ENCODE measurements at regions of chr1 and their contacts with region 1.

Region 1: GRCh38 chr1:7667625-7668218 is 103.4 kb upstream of the VAMP3 start:
- DNase-seq: peak; percentile 82
- H3K4me3 Mint-ChIP-seq: no peak overlapping the region
- H3K27ac Mint-ChIP-seq: peak overlapping the region; percentile 32
- H3K4me1 Mint-ChIP-seq: no peaks in the 10 kb centered on the region
- H3K27me3 Mint-ChIP-seq: no peaks in the 10 kb centered on the region
- CTCF ChIP-seq: peak; percentile 99

Region 2: GRCh38 chr1:7447077-7447476 is 220.6 kb before region 1 on chr1:
- CTCF ChIA-PET with region 1: no interaction called
- POLR2A ChIA-PET with region 1: no interaction called
- intact Hi-C with region 1: no loop called
- DNase-seq: no peak
- H3K4me3 Mint-ChIP-seq: no peak overlapping the region
- H3K27ac Mint-ChIP-seq: no peak overlapping the region
- H3K4me1 Mint-ChIP-seq: no peaks in the 10 kb centered on the region
- H3K27me3 Mint-ChIP-seq: no peaks in the 10 kb centered on the region
- CTCF ChIP-seq: no peak

Region 3: DNA sequence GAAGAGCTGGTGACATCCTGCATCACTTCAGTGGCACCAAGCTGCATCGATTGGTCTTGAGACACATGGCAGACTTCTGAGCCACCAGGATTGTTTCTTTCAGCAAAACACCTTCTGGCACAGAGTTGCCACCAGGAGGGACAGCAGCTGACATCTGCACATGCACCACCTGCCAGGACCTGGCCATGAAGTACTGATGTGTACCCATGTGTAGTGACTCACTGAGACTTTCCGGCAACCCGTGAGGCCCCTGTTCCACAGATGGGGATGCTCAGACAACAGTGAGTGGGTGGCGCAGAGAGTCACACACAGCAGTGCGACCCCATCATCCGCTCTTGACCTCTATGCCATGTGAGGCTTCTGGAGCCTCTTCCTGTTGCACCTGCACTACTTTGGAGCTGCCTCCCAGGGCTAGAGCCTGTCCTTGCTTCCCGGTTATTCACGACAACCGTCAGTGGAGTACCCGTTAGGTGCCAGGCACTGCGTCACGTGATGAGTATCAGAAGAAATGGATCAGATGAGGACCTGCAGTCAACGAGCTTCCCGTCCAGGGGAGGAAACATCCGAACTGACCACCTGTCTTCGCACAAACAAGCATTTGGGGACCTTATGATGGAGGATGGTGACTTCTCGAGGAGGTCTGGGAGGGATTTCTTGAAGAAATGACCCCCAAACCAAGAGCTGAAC is 22.9 kb after region 1 on chr1:
- CTCF ChIA-PET with region 1: interaction called, 32 read pairs
- POLR2A ChIA-PET with region 1: no interaction called
- intact Hi-C with region 1: no loop called
- DNase-seq: no peak
- H3K4me3 Mint-ChIP-seq: no peak overlapping the region
- H3K27ac Mint-ChIP-seq: no peak overlapping the region
- H3K4me1 Mint-ChIP-seq: no peaks in the 10 kb centered on the region
- H3K27me3 Mint-ChIP-seq: peaks cover 19% of the 10 kb centered on the region
- CTCF ChIP-seq: no peak

Region 4: DNA sequence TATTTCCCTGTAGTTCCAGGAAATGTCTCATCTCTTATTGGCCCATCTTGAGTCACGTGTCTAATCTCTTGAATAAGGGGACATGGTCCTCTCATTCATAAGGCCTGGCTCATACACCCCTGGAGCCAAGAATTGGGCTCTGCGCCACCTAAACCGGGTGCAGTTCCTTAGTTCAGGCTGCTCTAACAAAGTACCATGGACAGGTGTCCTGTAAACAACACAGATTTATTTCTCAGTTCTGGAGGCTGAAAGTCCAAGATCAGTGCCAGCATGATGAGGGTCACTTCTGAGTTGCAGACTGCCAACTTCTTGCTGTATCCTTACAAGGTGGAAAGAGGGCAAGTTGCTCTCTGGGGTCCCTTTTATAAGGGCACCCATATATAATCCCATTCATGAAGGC is 43.1 kb after region 1 on chr1:
- CTCF ChIA-PET with region 1: interaction called, 20 read pairs
- POLR2A ChIA-PET with region 1: no interaction called
- intact Hi-C with region 1: no loop called
- DNase-seq: no peak
- H3K4me3 Mint-ChIP-seq: no peak overlapping the region
- H3K27ac Mint-ChIP-seq: no peak overlapping the region
- H3K4me1 Mint-ChIP-seq: no peaks in the 10 kb centered on the region
- H3K27me3 Mint-ChIP-seq: peaks cover 40% of the 10 kb centered on the region
- CTCF ChIP-seq: no peak

Region 5: GRCh38 chr1:7745791-7746190 is 78.1 kb after region 1 on chr1:
- CTCF ChIA-PET with region 1: interaction called, 646 read pairs
- POLR2A ChIA-PET with region 1: interaction called, 23 read pairs
- intact Hi-C with region 1: no loop called
- DNase-seq: peak; percentile 69
- H3K4me3 Mint-ChIP-seq: peak overlapping the region; percentile 47
- H3K27ac Mint-ChIP-seq: peak overlapping the region; percentile 17
- H3K4me1 Mint-ChIP-seq: peaks cover 7% of the 10 kb centered on the region
- H3K27me3 Mint-ChIP-seq: no peaks in the 10 kb centered on the region
- CTCF ChIP-seq: no peak

Region 6: GRCh38 chr1:7760245-7760644 is 92.5 kb after region 1 on chr1:
- CTCF ChIA-PET with region 1: interaction called, 646 read pairs
- POLR2A ChIA-PET with region 1: no interaction called
- intact Hi-C with region 1: no loop called
- DNase-seq: no peak
- H3K4me3 Mint-ChIP-seq: no peak overlapping the region
- H3K27ac Mint-ChIP-seq: no peak overlapping the region
- H3K4me1 Mint-ChIP-seq: no peaks in the 10 kb centered on the region
- H3K27me3 Mint-ChIP-seq: peaks cover 16% of the 10 kb centered on the region
- CTCF ChIP-seq: no peak

Region 7: GRCh38 chr1:7902478-7903085 is 234.9 kb after region 1 on chr1:
- CTCF ChIA-PET with region 1: interaction called, 98 read pairs
- POLR2A ChIA-PET with region 1: no interaction called
- intact Hi-C with region 1: loop called (anchors 1 kb)
- DNase-seq: peak; percentile 73
- H3K4me3 Mint-ChIP-seq: no peak overlapping the region
- H3K27ac Mint-ChIP-seq: no peak overlapping the region
- H3K4me1 Mint-ChIP-seq: no peaks in the 10 kb centered on the region
- H3K27me3 Mint-ChIP-seq: no peaks in the 10 kb centered on the region
- CTCF ChIP-seq: peak; percentile 86

Region 8: GRCh38 chr1:8031176-8031785 is 363.6 kb after region 1 on chr1:
- CTCF ChIA-PET with region 1: no interaction called
- POLR2A ChIA-PET with region 1: no interaction called
- intact Hi-C with region 1: no loop called
- DNase-seq: peak; percentile 55
- H3K4me3 Mint-ChIP-seq: no peak overlapping the region
- H3K27ac Mint-ChIP-seq: peak overlapping the region; percentile 31
- H3K4me1 Mint-ChIP-seq: peaks cover 37% of the 10 kb centered on the region
- H3K27me3 Mint-ChIP-seq: no peaks in the 10 kb centered on the region
- CTCF ChIP-seq: peak; percentile 65

Region 9: GRCh38 chr1:8077120-8077573 is 409.4 kb after region 1 on chr1:
- CTCF ChIA-PET with region 1: no interaction called
- POLR2A ChIA-PET with region 1: no interaction called
- intact Hi-C with region 1: no loop called
- DNase-seq: peak; percentile 91
- H3K4me3 Mint-ChIP-seq: no peak overlapping the region
- H3K27ac Mint-ChIP-seq: peak overlapping the region; percentile 89
- H3K4me1 Mint-ChIP-seq: peaks cover 59% of the 10 kb centered on the region
- H3K27me3 Mint-ChIP-seq: no peaks in the 10 kb centered on the region
- CTCF ChIP-seq: no peak

Measured in MCF 10A (cell line).